CD8-positive, alpha-beta T cell (primary cell): ENCODE measurements at regions of chr4 and their contacts with region 1.

Region 1: GRCh38 chr4:38663801-38664705 is at the start of gene KLF3:
- DNase-seq: peak; percentile 90 to 96 (median 93)
- ATAC-seq: peak; percentile 70
- H3K4me3 ChIP-seq: peak within 1 kb of the TSS; percentile 84 to 89
- H3K4me3 Mint-ChIP-seq: peak within 1 kb of the TSS; percentile 99
- H3K27ac ChIP-seq: peak within 1 kb of the TSS; percentile 90 to 93
- H3K27ac Mint-ChIP-seq: peak within 1 kb of the TSS; percentile 98
- H3K4me1 ChIP-seq: peaks cover 61% of the 10 kb centered on the region
- H3K4me1 Mint-ChIP-seq: peaks cover 69% of the 10 kb centered on the region
- H3K27me3 ChIP-seq: no peaks in the 10 kb centered on the region
- H3K27me3 Mint-ChIP-seq: no peaks in the 10 kb centered on the region
- CTCF ChIP-seq: no peak
- total RNA-seq, gene KLF3: 181 to 194 TPM

Region 2: DNA sequence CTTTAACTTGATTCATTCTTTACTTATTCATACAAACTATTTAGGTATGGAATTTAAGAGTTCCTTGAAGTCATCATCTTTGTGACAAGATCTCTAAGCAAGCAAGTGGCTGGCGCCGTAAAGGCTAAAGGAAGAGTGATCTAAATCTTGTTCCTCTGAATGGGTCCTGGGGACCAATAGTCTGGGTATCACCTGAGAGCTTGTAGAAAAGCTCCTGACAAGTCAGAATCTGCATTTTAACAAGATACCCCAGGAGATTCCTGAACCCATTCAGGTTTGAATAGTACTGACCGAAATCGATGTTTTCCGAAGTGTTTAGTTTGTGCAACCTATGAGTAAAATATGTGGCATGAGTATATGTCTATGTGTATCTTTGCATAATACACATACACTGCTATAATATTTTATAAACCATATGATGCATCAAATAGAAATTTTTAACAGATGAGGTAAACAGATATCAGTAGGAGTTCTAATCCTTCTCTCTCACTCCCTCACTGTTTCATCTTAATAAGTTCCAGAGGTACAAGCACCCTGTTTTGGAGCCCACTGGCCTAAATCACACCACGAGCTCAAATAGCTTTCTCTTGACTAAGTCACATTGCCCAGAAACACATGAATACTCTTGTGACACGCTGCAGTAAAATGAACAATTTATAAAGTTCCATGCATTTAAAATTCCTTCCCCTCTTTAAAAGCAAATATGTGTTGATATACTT is 1147.8 kb before region 1 on chr4:
- CTCF ChIA-PET with region 1: no interaction called
- POLR2A ChIA-PET with region 1: no interaction called
- intact Hi-C with region 1: no loop called
- DNase-seq: no peak
- ATAC-seq: no peak
- H3K4me3 ChIP-seq: no peak overlapping the region
- H3K4me3 Mint-ChIP-seq: no peak overlapping the region
- H3K27ac ChIP-seq: no peak overlapping the region
- H3K27ac Mint-ChIP-seq: no peak overlapping the region
- H3K4me1 ChIP-seq: no peaks in the 10 kb centered on the region
- H3K4me1 Mint-ChIP-seq: no peaks in the 10 kb centered on the region
- H3K27me3 ChIP-seq: no peaks in the 10 kb centered on the region
- H3K27me3 Mint-ChIP-seq: no peaks in the 10 kb centered on the region
- CTCF ChIP-seq: no peak

Region 3: DNA sequence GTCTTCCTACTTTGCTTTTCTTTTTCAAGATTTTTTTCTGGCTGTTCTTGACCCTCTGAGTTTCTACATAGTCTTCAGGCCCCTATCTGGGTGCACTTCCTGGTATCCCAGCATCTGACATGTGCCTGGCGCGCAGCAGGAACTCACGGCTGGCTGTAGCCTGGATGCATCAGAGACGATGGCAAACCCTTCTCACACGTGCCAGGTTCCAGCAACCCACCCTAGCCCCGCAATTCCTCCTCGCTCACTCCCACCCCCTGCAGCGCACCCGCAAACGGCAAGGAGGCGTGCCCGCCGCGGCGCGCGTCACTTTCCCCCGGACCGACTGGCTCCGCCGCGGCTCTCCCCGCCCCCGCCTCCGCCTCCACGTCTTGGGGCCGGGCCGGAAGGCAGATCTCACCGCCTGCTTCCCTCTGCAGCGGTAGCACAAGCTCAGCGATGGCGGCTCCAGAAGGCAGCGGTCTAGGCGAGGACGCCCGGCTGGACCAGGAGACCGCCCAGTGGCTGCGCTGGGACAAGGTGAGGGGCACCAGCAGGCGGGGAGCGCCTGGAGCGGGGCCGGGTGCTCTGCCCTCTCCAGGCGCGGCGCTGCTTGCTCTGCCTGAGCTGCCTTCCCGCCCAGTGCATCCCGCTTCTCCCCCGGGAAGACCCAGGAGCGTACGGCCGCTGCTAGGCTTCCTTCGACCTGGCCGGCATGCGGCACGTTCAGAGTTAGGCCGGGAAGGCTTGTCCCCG is 837.6 kb before region 1 on chr4 and contains the start of gene PGM2:
- CTCF ChIA-PET with region 1: no interaction called
- POLR2A ChIA-PET with region 1: no interaction called
- intact Hi-C with region 1: loop called in 1 of 2 experiments (anchors 10 kb)
- DNase-seq: peak; percentile 81 to 93 (median 89)
- ATAC-seq: peak; percentile 98
- H3K4me3 ChIP-seq: peak within 1 kb of the TSS; percentile 96 to 99
- H3K4me3 Mint-ChIP-seq: peak within 1 kb of the TSS; percentile 97
- H3K27ac ChIP-seq: peak within 1 kb of the TSS; percentile 76 to 79
- H3K27ac Mint-ChIP-seq: peak within 1 kb of the TSS; percentile 92
- H3K4me1 ChIP-seq: peaks cover 23% of the 10 kb centered on the region
- H3K4me1 Mint-ChIP-seq: peaks cover 53% of the 10 kb centered on the region
- H3K27me3 ChIP-seq: no peaks in the 10 kb centered on the region
- H3K27me3 Mint-ChIP-seq: no peaks in the 10 kb centered on the region
- CTCF ChIP-seq: no peak
- total RNA-seq, gene PGM2: 14.5 to 15.4 TPM

Region 4: DNA sequence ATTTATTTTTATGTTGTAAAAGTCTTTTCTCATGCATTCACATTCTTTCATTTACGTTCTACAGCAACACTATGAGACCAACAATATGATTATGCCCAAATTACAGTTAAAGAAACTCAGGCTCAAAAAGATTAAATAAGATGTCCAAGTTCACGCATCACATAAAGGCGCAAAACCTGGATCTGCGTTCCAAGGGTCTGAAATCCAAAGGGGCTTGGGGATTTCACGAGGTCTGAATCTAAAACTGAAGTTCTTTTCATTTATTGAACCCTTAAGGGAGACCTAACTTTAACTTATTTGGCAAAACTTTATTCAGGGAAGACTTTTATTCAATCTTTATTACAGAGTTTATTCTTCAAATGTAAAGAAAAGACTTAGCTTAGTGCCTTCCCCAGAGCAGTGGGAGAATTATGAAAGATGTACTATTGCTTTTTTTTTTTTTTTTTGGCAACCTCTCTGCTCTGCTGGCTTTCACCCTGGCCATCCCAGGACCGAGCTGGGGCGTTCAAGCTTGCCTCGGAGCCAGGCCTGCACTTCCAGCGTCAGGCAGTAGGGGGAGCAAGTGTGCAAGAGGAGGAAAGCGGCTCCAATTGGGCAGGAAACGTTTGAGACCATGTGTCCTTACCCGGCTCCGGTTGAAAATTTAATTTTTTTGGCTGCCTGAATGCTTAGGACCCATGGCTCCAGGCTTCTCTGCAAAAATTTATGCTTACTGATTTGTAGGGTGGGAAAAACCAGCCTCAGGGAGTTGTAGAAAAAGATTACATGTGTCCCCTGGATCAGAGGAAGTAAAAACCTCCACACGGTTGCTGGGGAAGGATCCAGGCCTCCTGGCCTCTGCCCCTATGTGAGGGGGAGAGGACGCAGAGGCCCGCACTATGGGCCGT is 344.4 kb before region 1 on chr4:
- CTCF ChIA-PET with region 1: interaction called, 35 read pairs
- POLR2A ChIA-PET with region 1: interaction called, 23 read pairs
- intact Hi-C with region 1: no loop called
- DNase-seq: peak; percentile 83 to 98 (median 90)
- ATAC-seq: peak; percentile 88
- H3K4me3 ChIP-seq: peak overlapping the region; percentile 43 to 51
- H3K4me3 Mint-ChIP-seq: peak overlapping the region; percentile 82
- H3K27ac ChIP-seq: peak overlapping the region; percentile 33 to 78
- H3K27ac Mint-ChIP-seq: peak overlapping the region; percentile 90
- H3K4me1 ChIP-seq: peaks cover 39% of the 10 kb centered on the region
- H3K4me1 Mint-ChIP-seq: peaks cover 62% of the 10 kb centered on the region
- H3K27me3 ChIP-seq: no peaks in the 10 kb centered on the region
- H3K27me3 Mint-ChIP-seq: no peaks in the 10 kb centered on the region
- CTCF ChIP-seq: peak; percentile 96

Region 5: DNA sequence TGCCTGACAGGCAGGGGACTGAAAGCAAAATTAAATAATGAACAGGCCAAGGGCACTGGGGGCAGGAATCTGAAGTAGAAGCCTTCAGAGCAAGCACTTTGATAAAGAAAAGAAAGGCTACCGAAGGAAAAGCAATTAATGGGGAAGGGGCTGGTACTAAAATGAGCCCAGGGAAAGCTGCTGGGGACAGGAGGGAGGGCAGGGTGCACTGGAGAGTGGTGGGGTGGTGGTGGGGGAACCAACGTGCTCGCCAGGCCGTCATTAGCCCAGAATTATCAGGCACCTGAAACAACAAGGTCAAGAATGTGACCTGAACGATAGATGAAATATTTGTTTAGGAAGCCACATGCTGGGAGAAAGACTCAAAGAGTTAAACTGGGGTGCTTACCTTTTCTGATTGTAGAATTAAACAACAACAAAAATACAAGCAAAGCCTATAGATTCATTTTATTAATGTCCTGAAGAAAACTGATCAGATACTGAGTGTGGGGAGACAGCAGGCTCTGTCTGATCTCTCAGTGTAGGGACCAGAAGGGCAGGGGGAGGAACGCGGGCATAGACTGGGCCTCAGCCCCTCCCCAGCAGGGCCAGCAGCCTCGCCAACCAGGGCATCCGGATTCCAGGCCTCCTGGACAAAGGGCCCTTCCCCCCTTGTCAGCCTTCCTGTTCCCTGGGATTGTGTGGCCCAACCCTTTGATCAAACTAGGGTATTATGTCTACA is 239.7 kb before region 1 on chr4:
- CTCF ChIA-PET with region 1: no interaction called
- POLR2A ChIA-PET with region 1: no interaction called
- intact Hi-C with region 1: no loop called
- DNase-seq: no peak
- ATAC-seq: no peak
- H3K4me3 ChIP-seq: no peak overlapping the region
- H3K4me3 Mint-ChIP-seq: no peak overlapping the region
- H3K27ac ChIP-seq: no peak overlapping the region
- H3K27ac Mint-ChIP-seq: no peak overlapping the region
- H3K4me1 ChIP-seq: peaks cover 8% of the 10 kb centered on the region
- H3K4me1 Mint-ChIP-seq: peaks cover 12% of the 10 kb centered on the region
- H3K27me3 ChIP-seq: no peaks in the 10 kb centered on the region
- H3K27me3 Mint-ChIP-seq: no peaks in the 10 kb centered on the region
- CTCF ChIP-seq: no peak

Region 6: GRCh38 chr4:38612646-38613414 is 51.2 kb before region 1 on chr4:
- CTCF ChIA-PET with region 1: no interaction called
- POLR2A ChIA-PET with region 1: no interaction called
- intact Hi-C with region 1: loop called in 1 of 2 experiments (anchors 5 kb)
- DNase-seq: no peak
- ATAC-seq: no peak
- H3K4me3 ChIP-seq: no peak overlapping the region
- H3K4me3 Mint-ChIP-seq: no peak overlapping the region
- H3K27ac ChIP-seq: no peak overlapping the region
- H3K27ac Mint-ChIP-seq: no peak overlapping the region
- H3K4me1 ChIP-seq: peaks cover 13% of the 10 kb centered on the region
- H3K4me1 Mint-ChIP-seq: peaks cover 27% of the 10 kb centered on the region
- H3K27me3 ChIP-seq: no peaks in the 10 kb centered on the region
- H3K27me3 Mint-ChIP-seq: no peaks in the 10 kb centered on the region
- CTCF ChIP-seq: no peak

Region 7: DNA sequence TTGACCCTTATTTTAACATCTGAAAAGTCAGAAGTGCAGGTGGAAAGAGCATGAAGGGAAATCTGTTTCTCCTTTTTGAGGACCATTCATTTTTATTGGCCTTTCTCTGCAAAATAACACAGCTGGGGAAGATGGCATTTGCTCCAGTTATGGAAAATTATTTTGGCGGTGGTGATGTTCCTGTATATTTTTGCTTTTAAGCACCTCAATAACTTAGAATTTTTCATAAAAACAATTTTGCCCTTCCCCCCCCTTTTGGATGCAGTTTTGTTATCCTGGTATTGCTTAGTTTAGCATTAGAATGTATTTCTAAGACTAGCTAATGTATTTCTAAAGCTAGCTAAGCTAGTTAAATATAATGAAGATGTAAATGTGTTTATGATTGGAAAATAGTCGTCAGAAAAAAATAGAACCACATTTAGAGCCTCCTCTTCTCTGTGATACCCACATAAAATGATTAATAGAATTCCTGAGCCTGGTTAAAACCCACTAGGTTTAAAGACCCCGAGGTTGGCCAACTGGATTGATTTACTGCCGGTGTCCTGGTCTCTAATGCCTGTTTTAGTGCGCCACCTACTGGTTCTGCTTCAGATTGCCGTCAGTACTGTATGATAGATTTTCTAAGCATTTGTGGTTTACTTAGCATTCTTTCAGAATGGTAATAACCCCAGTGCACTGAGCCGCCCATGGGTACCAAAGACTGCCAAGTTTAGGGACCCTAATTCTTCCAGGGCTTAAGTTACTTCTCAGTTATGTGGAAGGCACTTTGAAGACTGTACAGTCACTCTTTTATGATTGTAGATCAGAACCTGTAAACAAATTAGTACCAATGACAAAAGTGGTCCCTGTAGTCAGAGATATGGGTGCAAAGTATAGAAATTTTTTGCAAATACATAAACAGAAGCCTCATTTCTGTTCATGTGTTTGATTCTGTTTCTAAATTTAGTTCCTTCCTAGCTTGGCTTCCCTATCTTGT is 11.4 kb after region 1 on chr4:
- CTCF ChIA-PET with region 1: interaction called, 24 read pairs
- POLR2A ChIA-PET with region 1: interaction called, 4 read pairs
- intact Hi-C with region 1: loop called in 1 of 2 experiments (anchors 1 kb)
- DNase-seq: peak; percentile 73 to 91 (median 86)
- ATAC-seq: peak; percentile 59
- H3K4me3 ChIP-seq: peak overlapping the region in 1 of 2 experiments; percentile 15
- H3K4me3 Mint-ChIP-seq: peak overlapping the region; percentile 71
- H3K27ac ChIP-seq: peak overlapping the region in 1 of 2 experiments; percentile 66
- H3K27ac Mint-ChIP-seq: peak overlapping the region; percentile 93
- H3K4me1 ChIP-seq: peaks cover 79% of the 10 kb centered on the region
- H3K4me1 Mint-ChIP-seq: peaks cover 88% of the 10 kb centered on the region
- H3K27me3 ChIP-seq: no peaks in the 10 kb centered on the region
- H3K27me3 Mint-ChIP-seq: no peaks in the 10 kb centered on the region
- CTCF ChIP-seq: peak; percentile 92

Region 8: DNA sequence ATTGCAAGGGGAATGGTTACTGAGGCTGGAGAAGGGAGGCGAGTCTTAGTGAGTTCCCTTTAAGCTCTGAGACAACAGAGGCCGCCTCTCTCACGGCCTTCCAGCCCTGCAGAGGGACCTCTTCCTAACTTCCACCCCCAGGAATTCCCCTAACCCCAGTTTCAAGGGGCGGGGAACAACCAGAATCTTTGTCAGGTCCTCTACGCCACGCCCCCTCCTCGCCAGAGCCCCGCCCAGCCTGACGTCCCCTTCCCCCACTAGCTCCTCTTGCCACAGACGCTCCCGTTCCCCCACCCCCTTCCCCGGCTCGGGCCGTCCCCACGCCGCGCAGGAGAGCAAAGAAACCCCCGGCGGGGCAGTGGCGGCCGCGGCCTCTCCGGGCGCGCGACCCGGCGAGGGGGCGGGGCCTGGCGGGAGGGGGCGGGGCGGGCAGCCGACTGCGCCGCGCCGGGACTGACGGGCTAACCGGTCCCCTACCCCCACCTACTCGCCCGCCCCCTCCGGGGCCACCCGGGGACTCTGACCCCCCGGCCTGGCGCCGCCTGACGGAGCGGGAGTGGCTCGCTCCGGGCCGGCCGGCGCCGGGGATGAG is 380.4 kb after region 1 on chr4:
- CTCF ChIA-PET with region 1: no interaction called
- POLR2A ChIA-PET with region 1: no interaction called
- intact Hi-C with region 1: loop called in 1 of 2 experiments (anchors 10 kb)
- DNase-seq: peak; percentile 85 to 99 (median 93)
- ATAC-seq: peak; percentile 83
- H3K4me3 ChIP-seq: peak overlapping the region; percentile 60 to 66
- H3K4me3 Mint-ChIP-seq: peak overlapping the region; percentile 92
- H3K27ac ChIP-seq: peak overlapping the region; percentile 59 to 89
- H3K27ac Mint-ChIP-seq: peak overlapping the region; percentile 96
- H3K4me1 ChIP-seq: peaks cover 21% of the 10 kb centered on the region
- H3K4me1 Mint-ChIP-seq: peaks cover 53% of the 10 kb centered on the region
- H3K27me3 ChIP-seq: no peaks in the 10 kb centered on the region
- H3K27me3 Mint-ChIP-seq: no peaks in the 10 kb centered on the region
- CTCF ChIP-seq: no peak

Region 9: GRCh38 chr4:40283968-40284367 is 1619.9 kb after region 1 on chr4:
- CTCF ChIA-PET with region 1: no interaction called
- POLR2A ChIA-PET with region 1: no interaction called
- intact Hi-C with region 1: loop called in 1 of 2 experiments (anchors 10 kb)
- DNase-seq: peak; percentile 53 to 94 (median 76)
- ATAC-seq: peak; percentile 93
- H3K4me3 ChIP-seq: no peak overlapping the region
- H3K4me3 Mint-ChIP-seq: peak overlapping the region; percentile 62
- H3K27ac ChIP-seq: peak overlapping the region; percentile 27 to 89
- H3K27ac Mint-ChIP-seq: peak overlapping the region; percentile 97
- H3K4me1 ChIP-seq: peaks cover 51% of the 10 kb centered on the region
- H3K4me1 Mint-ChIP-seq: peaks cover 70% of the 10 kb centered on the region
- H3K27me3 ChIP-seq: no peaks in the 10 kb centered on the region
- H3K27me3 Mint-ChIP-seq: no peaks in the 10 kb centered on the region
- CTCF ChIP-seq: peak; percentile 54